Left lung (tissue), 14 donors: ENCODE measurements at regions of chr19 and their contacts with region 1.

Region 1: DNA sequence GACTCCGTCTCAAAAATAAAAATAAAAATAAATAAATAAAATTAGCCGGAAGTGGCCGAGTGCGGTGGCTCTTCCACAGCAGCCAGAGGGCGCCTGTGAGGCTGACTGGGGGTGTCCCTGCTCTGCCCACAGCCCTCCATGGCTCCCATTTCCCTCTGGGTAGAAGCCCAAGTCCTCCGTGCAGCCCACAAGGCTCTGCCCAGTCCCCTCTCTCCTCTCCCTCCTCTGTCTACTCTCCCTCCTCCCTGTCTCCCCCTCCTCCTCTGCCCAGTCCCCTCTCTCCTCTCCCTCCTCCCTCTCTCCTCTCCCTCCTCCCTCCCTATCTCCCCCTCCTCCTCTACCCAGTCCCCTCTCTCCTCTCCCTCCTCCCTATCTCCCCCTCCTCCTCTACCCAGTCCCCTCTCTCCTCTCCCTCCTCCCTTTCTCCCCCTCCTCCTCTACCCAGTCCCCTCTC is 20.4 kb downstream of the MISP start:
- DNase-seq: no peak
- ATAC-seq: peak; percentile 25
- H3K4me3 ChIP-seq: no peak overlapping the region
- H3K27ac ChIP-seq: no peak overlapping the region
- H3K4me1 ChIP-seq: peaks cover 0 to 13% of the 10 kb centered on the region in 2 donors
- H3K27me3 ChIP-seq: no peaks in the 10 kb centered on the region
- CTCF ChIP-seq: peak; percentile 15 to 48

Region 2: DNA sequence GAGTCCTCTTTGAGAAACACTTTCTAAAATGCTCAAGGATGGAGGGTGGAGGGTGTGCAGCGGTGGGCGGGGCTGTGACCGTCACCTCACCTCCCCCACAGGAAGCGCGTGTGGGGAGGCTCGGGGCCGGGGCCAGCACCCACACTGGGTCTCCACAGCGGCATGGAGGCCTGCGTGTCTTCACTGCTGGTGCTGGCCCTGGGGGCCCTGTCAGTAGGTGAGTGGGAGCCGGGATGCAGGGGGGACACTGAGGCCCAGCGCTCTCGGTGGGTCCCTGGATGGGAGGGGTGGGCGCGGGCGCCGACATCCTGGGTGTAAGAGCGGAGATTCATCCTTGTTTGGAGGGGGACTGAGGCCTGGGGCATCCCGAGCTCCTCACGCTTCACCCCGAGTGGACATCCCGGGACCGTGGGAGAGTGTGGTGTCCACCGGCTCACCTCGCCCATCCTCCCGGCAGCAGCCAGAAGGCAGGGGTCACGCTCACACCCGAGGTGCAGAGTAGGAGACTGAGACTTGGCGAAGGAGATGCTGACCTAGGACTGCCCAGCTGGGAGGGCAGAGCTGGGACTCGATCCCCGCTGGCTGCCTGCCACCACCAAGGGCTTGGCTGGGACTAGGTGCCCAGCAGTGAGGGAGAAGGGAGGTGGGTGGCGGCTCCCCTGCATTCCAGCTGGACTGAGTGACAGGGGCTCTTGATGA is 227.3 kb before region 1 on chr19 and contains the start of gene GZMM:
- intact Hi-C with region 1: no loop called
- DNase-seq: peak in 1 of 4 donors; percentile 73
- ATAC-seq: peak; percentile 32
- H3K4me3 ChIP-seq: no peak within 1 kb of the TSS
- H3K27ac ChIP-seq: no peak within 1 kb of the TSS
- H3K4me1 ChIP-seq: no peaks in the 10 kb centered on the region
- H3K27me3 ChIP-seq: peaks cover 0 to 3% of the 10 kb centered on the region in 2 donors
- CTCF ChIP-seq: no peak
- polyA plus RNA-seq, gene GZMM: 0.45 to 1.1 (median 0.65) TPM in 5 of 6 donors, not detected in the other

Region 3: GRCh38 chr19:680287-681028 is 90.9 kb before region 1 on chr19:
- intact Hi-C with region 1: no loop called
- DNase-seq: peak; percentile 90 to 100 (median 100)
- ATAC-seq: peak; percentile 86
- H3K4me3 ChIP-seq: peak overlapping the region; percentile 60
- H3K27ac ChIP-seq: peak overlapping the region; percentile 91 to 92
- H3K4me1 ChIP-seq: peaks cover 10 to 48% of the 10 kb centered on the region in 2 donors
- H3K27me3 ChIP-seq: peaks cover 0 to 25% of the 10 kb centered on the region in 2 donors
- CTCF ChIP-seq: peak in 1 of 2 donors; percentile 35

Region 4: DNA sequence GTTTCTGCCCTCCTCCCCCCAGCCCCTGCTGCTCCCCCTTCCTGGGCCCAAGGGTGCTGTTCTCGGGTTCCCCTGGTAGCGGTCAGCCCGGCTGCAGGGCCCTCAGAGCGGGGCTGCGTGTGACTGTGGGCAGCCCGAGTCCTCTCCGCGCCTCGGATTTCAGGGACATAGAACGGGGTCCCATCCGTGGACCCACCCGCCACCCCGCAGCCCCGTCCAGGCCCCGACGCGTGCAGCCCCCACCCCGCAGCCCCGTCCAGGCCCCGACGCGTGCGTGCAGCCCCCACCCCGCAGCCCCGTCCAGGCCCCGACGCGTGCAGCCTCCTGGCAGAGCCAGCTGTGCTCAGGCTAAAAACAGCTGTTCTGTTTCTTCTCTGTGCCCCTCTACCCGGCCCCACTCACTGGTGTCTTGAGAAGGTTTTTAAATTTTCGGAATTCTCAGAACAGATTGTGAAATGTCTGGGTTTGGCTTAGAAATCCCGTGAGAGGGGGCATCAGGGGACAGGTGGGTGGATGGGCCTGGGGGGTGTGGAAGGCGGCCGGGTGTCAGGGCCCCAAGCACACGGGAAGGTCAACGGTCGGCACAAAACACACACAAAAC is 64.0 kb after region 1 on chr19:
- intact Hi-C with region 1: no loop called
- DNase-seq: peak in 2 of 4 donors; percentile 62 to 88
- ATAC-seq: peak; percentile 44
- H3K4me3 ChIP-seq: no peak overlapping the region
- H3K27ac ChIP-seq: no peak overlapping the region
- H3K4me1 ChIP-seq: peaks cover 0 to 15% of the 10 kb centered on the region in 2 donors
- H3K27me3 ChIP-seq: peaks cover 13 to 75% of the 10 kb centered on the region in 2 donors
- CTCF ChIP-seq: no peak

Region 5: GRCh38 chr19:850221-850978 is 79.0 kb after region 1 on chr19:
- intact Hi-C with region 1: loop called in 1 of 2 experiments (anchors 10 kb)
- DNase-seq: peak; percentile 86 to 97 (median 94)
- ATAC-seq: peak; percentile 89
- H3K4me3 ChIP-seq: no peak overlapping the region
- H3K27ac ChIP-seq: peak overlapping the region; percentile 48 to 80
- H3K4me1 ChIP-seq: peaks cover 6 to 49% of the 10 kb centered on the region in 2 donors
- H3K27me3 ChIP-seq: peaks cover 9 to 68% of the 10 kb centered on the region in 2 donors
- CTCF ChIP-seq: no peak

Region 6: GRCh38 chr19:917323-918151 is 146.2 kb after region 1 on chr19 and contains the start of gene KISS1R:
- intact Hi-C with region 1: loop called in 1 of 2 experiments (anchors 5 kb)
- DNase-seq: peak in 2 of 4 donors; percentile 45 to 90
- ATAC-seq: peak; percentile 32
- H3K4me3 ChIP-seq: peak within 1 kb of the TSS in 1 of 2 donors; percentile 12
- H3K27ac ChIP-seq: no peak within 1 kb of the TSS
- H3K4me1 ChIP-seq: peaks cover 17 to 78% of the 10 kb centered on the region in 2 donors
- H3K27me3 ChIP-seq: peaks cover 45 to 56% of the 10 kb centered on the region in 2 donors
- CTCF ChIP-seq: peak; percentile 36 to 46
- polyA plus RNA-seq, gene KISS1R: 0.11 to 0.15 TPM in 2 of 6 donors, not detected in the others

Region 7: GRCh38 chr19:984165-984967 is 213.0 kb after region 1 on chr19 and contains the start of gene WDR18:
- intact Hi-C with region 1: loop called in 1 of 2 experiments (anchors 10 kb)
- DNase-seq: peak; percentile 87 to 99 (median 94)
- ATAC-seq: peak; percentile 96
- H3K4me3 ChIP-seq: peak within 1 kb of the TSS; percentile 77 to 91
- H3K27ac ChIP-seq: peak within 1 kb of the TSS; percentile 70 to 77
- H3K4me1 ChIP-seq: peaks cover 7 to 39% of the 10 kb centered on the region in 2 donors
- H3K27me3 ChIP-seq: no peaks in the 10 kb centered on the region
- CTCF ChIP-seq: peak in 1 of 2 donors; percentile 56
- polyA plus RNA-seq, gene WDR18: 26.6 to 35.9 (median 34.1) TPM

Region 8: GRCh38 chr19:1087813-1088415 is 316.6 kb after region 1 on chr19:
- intact Hi-C with region 1: no loop called
- DNase-seq: peak in 1 of 4 donors; percentile 87
- ATAC-seq: peak; percentile 65
- H3K4me3 ChIP-seq: no peak overlapping the region
- H3K27ac ChIP-seq: peak overlapping the region; percentile 62 to 90
- H3K4me1 ChIP-seq: peaks cover 3 to 58% of the 10 kb centered on the region in 2 donors
- H3K27me3 ChIP-seq: no peaks in the 10 kb centered on the region
- CTCF ChIP-seq: no peak